PC-3 (cell line): ENCODE measurements at regions of chr4 and their contacts with region 1.

Region 1: GRCh38 chr4:21790438-21791029 is 158.0 kb downstream of the KCNIP4 start:
- DNase-seq: peak; percentile 78
- ATAC-seq: peak; percentile 41
- H3K4me3 ChIP-seq: peak overlapping the region; percentile 57; the same call in 1 of the 2 replicates
- H3K27ac ChIP-seq: peak overlapping the region; percentile 93
- H3K4me1 ChIP-seq: peaks cover 13% of the 10 kb centered on the region
- H3K27me3 ChIP-seq: no peaks in the 10 kb centered on the region
- CTCF ChIP-seq: peak; percentile 64

Region 2: DNA sequence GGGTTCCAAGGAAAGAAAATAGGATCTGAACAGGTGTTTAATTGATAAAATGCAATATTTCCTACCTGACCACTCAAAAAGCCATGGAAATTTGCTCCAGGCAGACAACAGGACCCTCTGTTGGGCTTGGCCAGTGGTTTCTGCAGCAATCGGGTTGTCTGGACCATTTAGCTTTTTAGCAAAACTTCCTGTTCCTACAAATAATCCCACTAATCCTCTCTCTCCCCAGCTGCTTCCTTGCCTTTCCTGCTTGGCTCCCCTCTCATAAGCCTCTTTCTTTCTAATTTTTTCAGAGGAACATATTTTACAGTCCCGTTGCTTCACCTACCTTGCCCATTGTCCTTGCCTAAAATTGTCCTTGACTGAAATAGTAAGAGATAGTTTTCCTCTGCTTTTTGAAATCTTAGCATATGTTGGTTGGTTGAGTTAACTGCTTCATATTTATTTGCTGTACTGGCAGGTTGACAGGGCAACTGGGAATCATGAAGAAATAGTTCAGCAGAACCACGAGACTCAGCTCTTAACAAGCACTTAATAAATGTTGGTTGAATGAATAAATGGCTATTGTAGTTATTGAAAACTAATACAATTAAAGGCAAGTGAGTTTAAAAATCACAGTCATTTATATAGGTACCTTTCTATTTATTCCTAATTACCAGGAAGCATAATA is 101.8 kb before region 1 on chr4:
- CTCF ChIA-PET with region 1: no interaction called
- POLR2A ChIA-PET with region 1: no interaction called
- intact Hi-C with region 1: no loop called
- DNase-seq: no peak
- ATAC-seq: no peak
- H3K4me3 ChIP-seq: no peak overlapping the region
- H3K27ac ChIP-seq: no peak overlapping the region
- H3K4me1 ChIP-seq: no peaks in the 10 kb centered on the region
- H3K27me3 ChIP-seq: peaks cover 15% of the 10 kb centered on the region
- CTCF ChIP-seq: no peak

Region 3: GRCh38 chr4:21802406-21802805 is 11.9 kb after region 1 on chr4:
- CTCF ChIA-PET with region 1: no interaction called
- POLR2A ChIA-PET with region 1: no interaction called
- intact Hi-C with region 1: no loop called
- DNase-seq: peak; percentile 73
- ATAC-seq: peak; percentile 98
- H3K4me3 ChIP-seq: no peak overlapping the region
- H3K27ac ChIP-seq: no peak overlapping the region
- H3K4me1 ChIP-seq: peaks cover 15% of the 10 kb centered on the region
- H3K27me3 ChIP-seq: no peaks in the 10 kb centered on the region
- CTCF ChIP-seq: no peak

Region 4: GRCh38 chr4:21888195-21888976 is 97.9 kb after region 1 on chr4:
- CTCF ChIA-PET with region 1: no interaction called
- POLR2A ChIA-PET with region 1: no interaction called
- intact Hi-C with region 1: loop called (anchors 2 kb)
- DNase-seq: peak; percentile 90
- ATAC-seq: peak; percentile 98
- H3K4me3 ChIP-seq: peak overlapping the region; percentile 33
- H3K27ac ChIP-seq: peak overlapping the region; percentile 94
- H3K4me1 ChIP-seq: peaks cover 35% of the 10 kb centered on the region
- H3K27me3 ChIP-seq: no peaks in the 10 kb centered on the region
- CTCF ChIP-seq: no peak

Region 5: DNA sequence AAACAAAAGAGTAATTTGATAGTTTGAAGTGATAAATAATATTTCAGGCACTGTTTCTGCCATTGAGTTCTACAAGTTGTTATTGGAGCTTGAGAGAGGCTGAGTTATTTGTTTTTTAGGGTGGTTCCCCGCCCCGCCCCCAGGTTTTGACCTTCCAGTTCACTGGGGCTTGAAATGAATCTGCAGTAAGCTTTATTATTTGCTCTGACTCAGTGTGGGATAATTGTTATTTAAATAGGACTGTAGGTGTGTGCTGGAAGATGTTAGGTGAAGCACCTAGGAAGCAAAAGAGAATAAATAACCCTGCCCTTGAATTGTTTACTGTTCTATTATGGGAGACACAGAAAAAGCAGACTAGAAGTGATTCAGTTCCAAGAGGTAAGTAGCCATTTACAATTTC is 239.3 kb after region 1 on chr4:
- CTCF ChIA-PET with region 1: no interaction called
- POLR2A ChIA-PET with region 1: no interaction called
- intact Hi-C with region 1: loop called (anchors 1 kb)
- DNase-seq: peak; percentile 69
- ATAC-seq: peak; percentile 97
- H3K4me3 ChIP-seq: no peak overlapping the region
- H3K27ac ChIP-seq: peak overlapping the region; percentile 46
- H3K4me1 ChIP-seq: peaks cover 13% of the 10 kb centered on the region
- H3K27me3 ChIP-seq: no peaks in the 10 kb centered on the region
- CTCF ChIP-seq: no peak

Region 6: GRCh38 chr4:22246847-22247246 is 456.3 kb after region 1 on chr4:
- CTCF ChIA-PET with region 1: no interaction called
- POLR2A ChIA-PET with region 1: no interaction called
- intact Hi-C with region 1: loop called (anchors 1 kb)
- DNase-seq: no peak
- ATAC-seq: no peak
- H3K4me3 ChIP-seq: no peak overlapping the region
- H3K27ac ChIP-seq: no peak overlapping the region
- H3K4me1 ChIP-seq: peaks cover 17% of the 10 kb centered on the region
- H3K27me3 ChIP-seq: no peaks in the 10 kb centered on the region
- CTCF ChIP-seq: no peak

Region 7: DNA sequence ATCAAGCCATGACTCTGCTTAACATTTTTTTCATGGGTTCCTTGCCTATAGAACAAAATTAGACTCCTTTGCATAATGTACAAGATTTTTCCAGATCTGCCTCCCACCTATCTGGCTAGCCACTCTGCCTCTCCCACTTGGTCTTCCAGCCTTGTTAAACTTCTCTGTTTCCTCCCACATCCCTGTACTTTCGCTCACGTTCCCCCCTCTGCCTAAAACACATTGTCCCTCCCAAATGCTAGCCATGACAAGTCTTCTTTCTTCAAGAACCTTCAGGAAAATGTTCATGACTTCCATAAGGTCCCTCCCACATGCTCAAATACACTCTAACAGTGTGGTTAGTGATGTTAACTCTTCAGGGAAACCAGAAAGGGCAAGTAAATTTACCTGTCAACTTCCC is 510.7 kb after region 1 on chr4:
- CTCF ChIA-PET with region 1: no interaction called
- POLR2A ChIA-PET with region 1: no interaction called
- intact Hi-C with region 1: no loop called
- DNase-seq: no peak
- ATAC-seq: no peak
- H3K4me3 ChIP-seq: no peak overlapping the region
- H3K27ac ChIP-seq: no peak overlapping the region
- H3K4me1 ChIP-seq: no peaks in the 10 kb centered on the region
- H3K27me3 ChIP-seq: no peaks in the 10 kb centered on the region
- CTCF ChIP-seq: no peak

Region 8: DNA sequence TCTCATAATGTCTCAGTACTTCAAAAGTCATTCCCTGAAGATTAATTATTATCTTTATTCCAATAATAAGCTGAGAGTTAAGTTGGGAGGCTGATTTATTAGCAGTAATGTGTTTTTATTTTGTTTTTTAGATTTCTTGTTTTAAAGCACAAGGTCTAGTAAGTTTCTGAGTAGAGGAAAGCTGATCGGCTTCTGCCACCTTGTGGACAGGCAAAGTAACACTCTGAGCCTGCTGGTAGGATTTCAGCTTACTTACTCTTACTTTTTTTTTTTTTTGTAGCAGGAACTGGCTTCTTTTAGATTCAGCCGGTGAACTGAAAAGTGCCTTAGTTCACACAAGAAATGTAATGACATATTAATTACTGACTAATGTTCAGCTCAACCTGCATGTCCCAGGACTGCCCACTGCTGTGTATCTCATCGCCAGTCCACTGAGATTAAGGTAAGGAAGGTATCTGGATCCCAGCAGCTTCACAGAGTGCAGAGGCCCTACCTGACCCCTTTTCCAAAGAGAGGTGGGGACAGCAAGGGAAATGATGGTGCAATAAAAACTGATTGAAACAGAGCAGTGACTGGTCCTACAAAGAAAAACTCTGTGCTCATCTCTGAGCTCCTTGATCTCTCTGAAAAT is 598.8 kb after region 1 on chr4:
- CTCF ChIA-PET with region 1: interaction called, 16 read pairs
- POLR2A ChIA-PET with region 1: no interaction called
- intact Hi-C with region 1: loop called (anchors 1 kb)
- DNase-seq: peak; percentile 67
- ATAC-seq: no peak
- H3K4me3 ChIP-seq: no peak overlapping the region
- H3K27ac ChIP-seq: no peak overlapping the region
- H3K4me1 ChIP-seq: peaks cover 29% of the 10 kb centered on the region
- H3K27me3 ChIP-seq: no peaks in the 10 kb centered on the region
- CTCF ChIP-seq: peak; percentile 85

Region 9: DNA sequence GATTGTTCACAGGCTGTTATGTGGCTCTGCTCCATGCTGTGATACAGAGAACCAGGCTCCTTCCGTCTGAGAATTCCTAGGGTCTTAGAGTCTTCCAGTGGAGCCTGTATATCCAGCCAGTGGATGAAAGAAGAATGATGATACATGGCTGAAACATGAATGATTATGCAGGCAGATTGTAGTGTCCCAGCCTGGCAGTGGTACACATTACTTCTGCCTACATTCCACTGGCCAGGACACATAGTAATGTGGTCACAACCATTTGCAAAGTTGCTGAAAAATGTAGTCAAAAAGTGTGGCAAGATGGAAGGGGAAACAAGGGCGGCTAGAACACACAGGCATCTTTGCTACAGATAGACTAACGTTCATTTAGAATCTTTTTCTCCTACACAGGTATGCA is 897.7 kb after region 1 on chr4:
- CTCF ChIA-PET with region 1: no interaction called
- POLR2A ChIA-PET with region 1: no interaction called
- intact Hi-C with region 1: loop called (anchors 1 kb)
- DNase-seq: no peak
- ATAC-seq: no peak
- H3K4me3 ChIP-seq: no peak overlapping the region
- H3K27ac ChIP-seq: no peak overlapping the region
- H3K4me1 ChIP-seq: no peaks in the 10 kb centered on the region
- H3K27me3 ChIP-seq: peaks cover 42% of the 10 kb centered on the region
- CTCF ChIP-seq: no peak